Astrocyte of the cerebellum (primary cell): ENCODE measurements at regions of chr17 and their contacts with region 1.

Region 1: DNA sequence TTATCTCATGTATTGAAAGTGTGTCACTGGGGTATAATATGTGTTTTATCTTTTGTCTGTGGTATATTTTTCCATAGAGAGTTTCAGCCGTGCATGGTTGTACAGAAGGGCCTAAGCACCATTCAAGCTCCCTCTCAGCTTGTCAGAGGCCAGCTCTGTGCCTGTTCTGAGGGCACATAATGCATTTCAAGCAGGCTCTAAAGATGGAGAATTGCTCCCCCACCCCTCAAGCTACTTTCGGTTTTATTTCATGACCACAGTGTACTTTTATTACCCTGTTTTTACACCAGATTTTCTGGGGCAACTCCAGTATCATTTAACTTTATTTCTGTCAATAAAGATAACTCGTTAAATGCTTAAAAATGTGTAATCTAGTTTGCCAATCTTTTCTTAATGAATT is 131.7 kb downstream of the SHISA6 start:
- DNase-seq: no peak
- H3K4me3 ChIP-seq: no peak overlapping the region
- CTCF ChIP-seq: no peak

Region 2: DNA sequence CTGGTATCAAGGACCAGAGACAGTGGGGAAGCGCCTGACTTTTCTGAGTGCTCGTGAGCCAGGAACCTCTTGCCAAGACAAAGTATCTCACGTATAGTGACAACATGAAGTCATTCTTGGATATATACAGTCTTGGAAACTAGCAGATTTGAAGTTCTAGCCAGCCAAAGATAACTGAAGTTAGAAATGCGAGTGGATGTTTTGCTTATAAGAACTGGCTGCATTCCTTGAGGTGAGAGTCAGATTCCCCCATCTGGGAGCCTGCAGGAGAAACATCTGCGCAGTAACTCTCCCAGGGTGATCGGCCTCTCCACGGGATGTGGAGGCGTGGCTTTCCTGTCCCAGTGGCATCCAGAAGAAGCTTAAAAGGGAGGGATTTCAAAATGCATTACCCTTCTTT is 41.9 kb before region 1 on chr17:
- in situ Hi-C with region 1: loop called (anchors 5 kb)
- DNase-seq: peak; percentile 18
- H3K4me3 ChIP-seq: no peak overlapping the region
- CTCF ChIP-seq: no peak